Dorsolateral prefrontal cortex (tissue), 120 donors: ENCODE measurements at regions of chr12 and their contacts with region 1.

Region 1: GRCh38 chr12:116142936-116143898 is 134.3 kb downstream of the MED13L start:
- DNase-seq: no peak
- H3K4me3 ChIP-seq: no peak overlapping the region
- H3K27ac ChIP-seq: no peak overlapping the region
- H3K27me3 ChIP-seq: no peaks in the 10 kb centered on the region
- CTCF ChIP-seq: no peak

Region 2: GRCh38 chr12:116164250-116165035 is 21.2 kb after region 1 on chr12:
- intact Hi-C with region 1: no loop called
- DNase-seq: no peak
- H3K4me3 ChIP-seq: peak overlapping the region in 5 of 59 donors; percentile 7 to 14 (median 10)
- H3K27ac ChIP-seq: peak overlapping the region in 7 of 59 donors; percentile 9 to 35 (median 19)
- H3K27me3 ChIP-seq: no peaks in the 10 kb centered on the region
- CTCF ChIP-seq: no peak

Region 3: GRCh38 chr12:116236148-116236731 is 93.0 kb after region 1 on chr12:
- intact Hi-C with region 1: loop called in 1 of 2 experiments (anchors 5 kb)
- DNase-seq: peak in 4 of 10 donors; percentile 10 to 61 (median 52)
- H3K4me3 ChIP-seq: no peak overlapping the region
- H3K27ac ChIP-seq: peak overlapping the region in 15 of 59 donors; percentile 2 to 66 (median 29)
- H3K27me3 ChIP-seq: no peaks in the 10 kb centered on the region
- CTCF ChIP-seq: peak; percentile 59 to 96 (median 82)

Region 4: GRCh38 chr12:116263844-116264243 is 120.6 kb after region 1 on chr12:
- intact Hi-C with region 1: no loop called
- DNase-seq: no peak
- H3K4me3 ChIP-seq: no peak overlapping the region
- H3K27ac ChIP-seq: peak overlapping the region in 1 of 59 donors; percentile 6
- H3K27me3 ChIP-seq: no peaks in the 10 kb centered on the region
- CTCF ChIP-seq: no peak

Region 5: GRCh38 chr12:116599285-116600136 is 456.3 kb after region 1 on chr12:
- intact Hi-C with region 1: loop called (anchors 10 kb)
- DNase-seq: peak; percentile 51 to 78 (median 66)
- H3K4me3 ChIP-seq: peak overlapping the region; percentile 5 to 66 (median 42)
- H3K27ac ChIP-seq: peak overlapping the region in 48 of 59 donors; percentile 5 to 78 (median 60)
- H3K27me3 ChIP-seq: peaks cover 0 to 4% (median 0%) of the 10 kb centered on the region in 45 donors
- CTCF ChIP-seq: peak in 55 of 56 donors; percentile 42 to 79 (median 64)

Region 6: GRCh38 chr12:116708826-116709756 is 565.9 kb after region 1 on chr12:
- intact Hi-C with region 1: loop called in 1 of 2 experiments (anchors 5 kb)
- DNase-seq: peak; percentile 75 to 97 (median 90)
- H3K4me3 ChIP-seq: peak overlapping the region; percentile 29 to 66 (median 50)
- H3K27ac ChIP-seq: peak overlapping the region in 57 of 59 donors; percentile 21 to 95 (median 84)
- H3K27me3 ChIP-seq: no peaks in the 10 kb centered on the region
- CTCF ChIP-seq: peak; percentile 61 to 95 (median 84)